ENCODE measurements at regions of chr11 and their contacts with region 1.

Region 1: GRCh38 chr11:75896843-75897419 is 81.9 kb downstream of the UVRAG start:
- DNase-seq: no peak
- H3K4me3 ChIP-seq: no peak overlapping the region
- H3K27ac ChIP-seq: no peak overlapping the region
- H3K4me1 ChIP-seq: peaks cover 0 to 12% (median 0%) of the 10 kb centered on the region in 4 donors
- H3K27me3 ChIP-seq: no peaks in the 10 kb centered on the region
- CTCF ChIP-seq: peak; percentile 67 to 87

Region 2: DNA sequence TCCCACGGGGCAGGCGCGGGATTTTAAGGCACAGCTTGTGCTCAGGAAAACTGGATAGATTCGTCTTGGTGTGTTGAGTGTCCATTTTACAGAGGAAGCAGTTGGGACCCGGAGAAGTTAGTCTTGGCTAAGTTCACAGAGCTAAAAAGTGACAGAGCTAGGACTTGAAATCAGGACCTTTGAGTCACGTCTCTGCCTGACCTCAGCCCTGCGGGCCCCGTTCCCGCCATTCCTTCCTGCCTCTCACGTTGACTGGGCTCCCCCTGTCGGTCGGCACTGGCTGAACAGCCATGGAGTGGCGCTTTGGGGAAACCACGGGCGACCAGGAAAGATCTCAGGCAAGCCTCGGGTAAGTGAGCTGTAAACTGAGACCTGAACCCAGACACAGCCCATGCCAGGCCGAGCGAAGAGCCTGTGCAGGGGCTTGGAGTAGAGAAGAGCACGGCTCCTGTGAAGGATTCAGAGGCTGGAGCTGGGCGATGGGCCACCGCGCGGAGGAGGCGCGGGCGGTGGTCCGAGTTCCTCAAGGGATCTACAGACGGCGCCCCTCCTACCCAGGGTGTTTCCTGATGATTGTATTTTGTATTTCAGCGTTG is 255.3 kb after region 1 on chr11:
- intact Hi-C with region 1: loop called (anchors 2 kb)
- DNase-seq: peak; percentile 92 to 93
- H3K4me3 ChIP-seq: peak overlapping the region; percentile 26 to 31
- H3K27ac ChIP-seq: no peak overlapping the region
- H3K4me1 ChIP-seq: peaks cover 0 to 10% (median 4%) of the 10 kb centered on the region in 4 donors
- H3K27me3 ChIP-seq: no peaks in the 10 kb centered on the region
- CTCF ChIP-seq: peak; percentile 93 to 97

Region 3: DNA sequence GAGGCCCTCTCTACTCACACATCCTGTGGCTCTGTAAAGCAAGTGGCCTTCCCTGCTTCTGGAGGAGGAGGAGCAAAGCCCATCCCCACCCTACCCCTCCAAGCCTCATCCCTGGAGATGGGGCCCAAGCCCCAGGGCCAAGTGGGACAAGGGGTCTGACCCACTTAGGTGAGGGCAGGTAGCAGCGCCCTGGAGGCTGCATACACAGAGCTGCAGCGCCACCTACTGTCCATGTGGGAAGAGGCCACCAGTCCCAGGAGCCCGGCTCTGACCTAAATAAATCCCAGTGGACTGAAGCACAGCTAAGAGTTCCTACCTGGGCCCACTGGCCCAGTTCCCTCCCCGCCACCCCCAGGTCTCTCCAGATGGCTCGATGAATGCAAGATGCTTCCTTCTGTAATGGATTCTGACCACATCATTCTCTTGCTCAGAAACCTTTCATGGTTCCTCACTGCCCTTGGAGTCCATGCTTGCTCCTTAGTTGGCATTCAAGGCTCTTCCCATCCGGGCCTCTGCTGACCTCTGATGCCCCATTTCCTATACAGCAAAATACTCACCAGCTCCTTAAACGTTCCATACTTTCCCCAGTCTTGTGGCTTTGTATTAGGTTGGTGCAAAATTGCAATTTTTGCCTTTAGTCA is 421.9 kb after region 1 on chr11:
- intact Hi-C with region 1: loop called (anchors 5 kb)
- DNase-seq: peak; percentile 80 to 83
- H3K4me3 ChIP-seq: no peak overlapping the region
- H3K27ac ChIP-seq: no peak overlapping the region
- H3K4me1 ChIP-seq: peaks cover 0 to 10% (median 3%) of the 10 kb centered on the region in 4 donors
- H3K27me3 ChIP-seq: peaks cover 0 to 29% of the 10 kb centered on the region in 2 donors
- CTCF ChIP-seq: peak; percentile 93

Region 4: DNA sequence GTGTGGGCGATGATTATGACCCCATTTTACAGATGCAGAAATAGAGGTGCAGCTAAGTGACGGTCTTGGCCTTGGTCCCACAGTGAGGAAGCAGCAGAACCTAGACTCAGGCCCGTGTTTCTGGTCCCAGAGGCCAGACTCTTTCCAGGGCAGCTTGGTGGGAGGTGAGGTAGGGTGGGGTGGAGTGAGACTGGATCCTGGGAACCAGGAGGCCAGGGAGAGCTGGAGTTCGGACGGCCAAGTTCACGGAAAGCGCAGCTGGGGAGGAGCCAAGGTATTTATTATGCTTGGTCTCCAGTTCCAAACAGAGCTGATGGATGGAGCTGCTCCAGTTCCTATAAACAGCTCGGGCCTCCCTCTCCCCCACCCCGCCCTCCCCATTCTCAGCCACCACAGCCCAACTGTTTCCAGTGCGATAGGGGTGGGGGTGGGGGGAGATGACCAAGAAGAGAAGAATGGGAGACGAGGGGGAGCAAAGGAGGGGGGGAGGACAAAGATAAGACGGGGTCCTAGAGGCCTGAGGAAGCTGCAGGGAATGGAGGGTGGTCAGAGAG is 757.4 kb after region 1 on chr11:
- intact Hi-C with region 1: no loop called
- DNase-seq: peak; percentile 81 to 94
- H3K4me3 ChIP-seq: no peak overlapping the region
- H3K27ac ChIP-seq: peak overlapping the region; percentile 80 to 91
- H3K4me1 ChIP-seq: peaks cover 4 to 87% (median 71%) of the 10 kb centered on the region in 4 donors
- H3K27me3 ChIP-seq: no peaks in the 10 kb centered on the region
- CTCF ChIP-seq: no peak